ENCODE measurements at regions of chrX and their contacts with region 1.

Region 1: DNA sequence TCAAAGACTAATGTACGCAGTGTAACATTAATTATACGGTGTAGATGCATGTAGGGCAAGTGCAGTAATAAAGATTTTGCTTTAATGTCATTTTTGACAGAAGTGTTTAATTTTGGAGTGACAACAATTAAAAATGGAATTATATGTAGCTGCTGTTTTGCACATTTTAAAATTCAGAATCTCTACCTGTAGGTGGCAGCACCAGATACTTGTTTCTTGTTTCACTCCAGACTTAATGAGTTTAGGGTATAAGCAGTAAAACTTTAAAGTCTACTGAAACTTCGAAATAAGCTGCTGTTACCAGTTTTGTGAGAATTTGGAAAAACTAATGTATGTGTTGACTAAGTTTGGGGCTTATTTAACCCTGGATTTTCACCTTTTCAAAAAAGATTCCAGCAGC is 144.9 kb downstream of the POLA1 start:
- DNase-seq: no peak
- H3K4me3 Mint-ChIP-seq: no peak overlapping the region
- H3K27ac Mint-ChIP-seq: no peak overlapping the region
- H3K4me1 Mint-ChIP-seq: no peaks in the 10 kb centered on the region
- H3K27me3 Mint-ChIP-seq: no peaks in the 10 kb centered on the region

Region 2: DNA sequence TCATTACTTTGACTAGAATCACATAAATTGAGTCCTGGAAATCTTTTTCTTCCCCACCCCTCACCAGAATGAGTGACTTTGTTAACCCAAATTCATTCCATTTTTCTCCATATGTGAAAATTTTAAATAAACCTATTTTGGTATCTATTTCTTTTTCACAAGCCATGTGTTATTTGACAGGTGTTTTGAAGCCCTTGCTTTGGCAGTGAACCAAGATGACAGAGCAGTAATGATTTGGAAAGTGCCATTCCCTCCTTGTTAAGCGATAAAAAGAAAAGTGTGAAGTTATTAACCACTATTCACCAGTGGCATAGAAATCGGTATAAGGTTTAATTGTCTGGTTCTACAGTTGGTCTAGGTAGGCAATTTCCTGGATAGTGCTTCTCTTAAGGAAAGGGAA is 78.8 kb before region 1 on chrX:
- intact Hi-C with region 1: loop called (anchors 5 kb)
- DNase-seq: no peak
- H3K4me3 Mint-ChIP-seq: no peak overlapping the region
- H3K27ac Mint-ChIP-seq: no peak overlapping the region
- H3K4me1 Mint-ChIP-seq: peaks cover 6% of the 10 kb centered on the region
- H3K27me3 Mint-ChIP-seq: no peaks in the 10 kb centered on the region

Region 3: DNA sequence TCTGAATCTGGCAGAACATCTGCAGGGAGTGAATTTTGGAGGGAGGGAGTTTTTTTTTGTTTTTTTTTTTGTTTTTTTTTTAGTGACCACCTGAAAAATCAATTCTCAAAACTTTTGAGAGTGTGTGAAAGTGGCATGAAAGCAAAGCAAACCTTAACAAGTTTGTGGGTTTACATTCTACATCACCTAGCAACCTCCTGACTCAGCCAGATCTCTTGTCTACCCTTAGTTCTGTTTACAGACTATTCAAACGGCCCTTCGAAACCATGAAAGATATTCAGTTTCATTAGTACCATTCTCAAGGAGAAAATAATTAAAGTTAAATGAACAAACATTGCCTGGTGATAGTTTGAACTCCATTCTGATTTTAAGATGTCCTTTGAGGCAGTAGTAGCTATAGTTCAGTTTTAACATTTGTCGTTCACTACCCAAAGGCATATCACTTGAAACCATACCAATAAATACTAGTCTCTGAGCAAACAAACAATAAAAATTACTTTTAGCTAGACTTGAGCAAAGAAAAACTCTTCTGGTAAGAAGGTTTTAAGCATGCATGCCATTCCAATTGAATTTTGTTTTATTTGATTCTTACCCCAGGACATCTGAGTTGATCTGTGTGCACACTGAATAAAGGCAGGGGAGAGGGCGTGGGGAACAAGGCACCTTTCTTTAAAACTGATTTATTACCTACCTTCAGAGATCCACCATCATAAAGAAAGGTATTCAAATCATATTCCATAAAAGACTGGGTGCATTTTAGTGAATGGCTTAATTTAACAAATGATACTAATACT is 39.4 kb after region 1 on chrX:
- intact Hi-C with region 1: no loop called
- DNase-seq: no peak
- H3K4me3 Mint-ChIP-seq: no peak overlapping the region
- H3K27ac Mint-ChIP-seq: no peak overlapping the region
- H3K4me1 Mint-ChIP-seq: peaks cover 4% of the 10 kb centered on the region
- H3K27me3 Mint-ChIP-seq: no peaks in the 10 kb centered on the region

Region 4: GRCh38 chrX:25004485-25005032 is 165.9 kb after region 1 on chrX:
- intact Hi-C with region 1: loop called (anchors 5 kb)
- DNase-seq: no peak
- H3K4me3 Mint-ChIP-seq: no peak overlapping the region
- H3K27ac Mint-ChIP-seq: no peak overlapping the region
- H3K4me1 Mint-ChIP-seq: no peaks in the 10 kb centered on the region
- H3K27me3 Mint-ChIP-seq: peaks cover 40% of the 10 kb centered on the region

Region 5: DNA sequence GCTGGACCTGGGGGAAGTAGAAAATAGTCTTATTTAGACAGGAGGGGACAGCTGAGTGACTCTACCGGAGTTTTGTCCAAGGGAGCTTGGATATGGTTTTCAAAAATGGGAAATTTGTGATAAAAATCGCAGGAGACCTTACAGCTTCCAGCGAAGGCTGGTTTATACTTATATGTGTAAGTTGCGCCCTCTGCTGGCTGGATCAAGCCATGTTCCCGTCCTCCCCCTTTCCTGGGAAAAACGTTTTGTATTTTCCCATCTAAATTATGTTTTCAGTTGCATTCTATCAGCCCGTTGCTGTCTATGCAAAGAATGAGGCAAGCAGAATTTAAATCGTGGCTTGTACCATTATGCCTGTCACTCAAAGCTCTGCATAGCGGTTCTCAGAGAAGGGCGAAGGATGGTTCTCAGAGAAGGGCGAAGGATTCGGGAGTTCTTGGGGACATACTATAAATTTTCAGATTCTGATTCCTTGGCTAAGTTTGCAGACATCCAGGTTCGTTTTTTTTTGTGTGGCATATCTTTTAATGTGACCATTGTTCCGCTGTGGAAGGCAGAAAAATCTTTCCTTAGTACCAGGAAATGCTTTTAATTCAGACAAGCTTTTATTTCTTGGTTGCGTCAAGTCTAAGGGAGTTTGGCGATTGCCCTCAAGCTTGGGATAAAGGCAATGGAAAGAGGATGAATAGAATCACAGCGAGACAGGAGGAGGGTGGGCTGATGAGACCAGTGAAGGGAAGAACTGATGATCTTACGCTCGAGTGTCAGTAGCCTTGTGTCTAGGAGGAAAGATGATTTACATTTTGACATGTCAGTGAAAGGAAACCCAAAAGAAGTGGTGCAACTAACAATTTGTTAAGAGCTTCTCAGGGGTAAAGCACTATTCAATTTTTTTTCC is 305.7 kb after region 1 on chrX:
- intact Hi-C with region 1: loop called (anchors 1 kb)
- DNase-seq: no peak
- H3K4me3 Mint-ChIP-seq: no peak overlapping the region
- H3K27ac Mint-ChIP-seq: no peak overlapping the region
- H3K4me1 Mint-ChIP-seq: no peaks in the 10 kb centered on the region
- H3K27me3 Mint-ChIP-seq: peaks cover 13% of the 10 kb centered on the region